Activated CD4-positive, alpha-beta memory T cell treated with anti-CD3 and anti-CD28 coated beads for 36 hours (primary cell): ENCODE measurements at regions of chr12 and their contacts with region 1.

Region 1: DNA sequence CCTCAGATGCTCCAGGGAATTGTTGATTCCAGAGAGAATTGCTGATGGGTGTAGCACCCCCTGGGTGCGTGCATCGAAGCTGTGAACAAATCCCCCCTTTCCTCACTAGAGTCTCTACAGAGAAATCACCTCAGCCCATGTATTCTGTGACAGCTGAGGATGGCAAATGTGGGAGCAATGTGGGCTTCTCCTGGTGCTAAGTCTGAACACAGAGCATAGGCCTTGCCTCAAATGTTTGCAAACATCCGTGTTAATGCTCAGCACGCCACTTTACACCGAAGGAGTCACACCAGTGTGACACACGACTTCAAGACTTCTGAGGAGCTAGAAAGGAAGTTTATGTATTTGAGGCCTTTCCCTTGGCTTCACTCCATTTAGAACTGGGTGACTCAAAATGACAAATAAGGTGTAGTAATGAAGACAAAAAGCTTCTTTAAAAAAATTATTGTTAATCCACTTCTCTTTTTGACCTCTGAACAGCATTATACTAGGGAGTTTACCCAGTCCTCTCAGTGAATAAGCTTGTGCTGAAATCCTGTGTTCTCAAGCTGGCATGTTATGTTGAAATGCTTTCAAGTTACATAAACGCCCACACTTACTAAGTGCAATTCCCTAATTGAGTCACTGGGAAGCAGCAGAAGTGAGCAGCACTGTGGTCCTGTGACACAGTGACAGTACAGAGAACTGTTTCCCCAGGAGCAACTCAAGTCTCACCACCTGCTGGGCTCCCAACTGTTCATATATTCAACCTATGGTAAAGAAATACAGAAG is 92.9 kb downstream of the FAR2 start:
- DNase-seq: peak; percentile 35
- H3K4me3 Mint-ChIP-seq: no peak overlapping the region
- H3K27ac Mint-ChIP-seq: no peak overlapping the region
- H3K4me1 Mint-ChIP-seq: peaks cover 18% of the 10 kb centered on the region
- H3K27me3 Mint-ChIP-seq: no peaks in the 10 kb centered on the region

Region 2: GRCh38 chr12:29082522-29082921 is 159.5 kb before region 1 on chr12:
- CTCF ChIA-PET with region 1: interaction called, 5 read pairs
- POLR2A ChIA-PET with region 1: no interaction called
- intact Hi-C with region 1: loop called (anchors 1 kb)
- DNase-seq: no peak
- H3K4me3 Mint-ChIP-seq: no peak overlapping the region
- H3K27ac Mint-ChIP-seq: peak overlapping the region; percentile 40
- H3K4me1 Mint-ChIP-seq: peaks cover 16% of the 10 kb centered on the region
- H3K27me3 Mint-ChIP-seq: peaks cover 25% of the 10 kb centered on the region

Region 3: DNA sequence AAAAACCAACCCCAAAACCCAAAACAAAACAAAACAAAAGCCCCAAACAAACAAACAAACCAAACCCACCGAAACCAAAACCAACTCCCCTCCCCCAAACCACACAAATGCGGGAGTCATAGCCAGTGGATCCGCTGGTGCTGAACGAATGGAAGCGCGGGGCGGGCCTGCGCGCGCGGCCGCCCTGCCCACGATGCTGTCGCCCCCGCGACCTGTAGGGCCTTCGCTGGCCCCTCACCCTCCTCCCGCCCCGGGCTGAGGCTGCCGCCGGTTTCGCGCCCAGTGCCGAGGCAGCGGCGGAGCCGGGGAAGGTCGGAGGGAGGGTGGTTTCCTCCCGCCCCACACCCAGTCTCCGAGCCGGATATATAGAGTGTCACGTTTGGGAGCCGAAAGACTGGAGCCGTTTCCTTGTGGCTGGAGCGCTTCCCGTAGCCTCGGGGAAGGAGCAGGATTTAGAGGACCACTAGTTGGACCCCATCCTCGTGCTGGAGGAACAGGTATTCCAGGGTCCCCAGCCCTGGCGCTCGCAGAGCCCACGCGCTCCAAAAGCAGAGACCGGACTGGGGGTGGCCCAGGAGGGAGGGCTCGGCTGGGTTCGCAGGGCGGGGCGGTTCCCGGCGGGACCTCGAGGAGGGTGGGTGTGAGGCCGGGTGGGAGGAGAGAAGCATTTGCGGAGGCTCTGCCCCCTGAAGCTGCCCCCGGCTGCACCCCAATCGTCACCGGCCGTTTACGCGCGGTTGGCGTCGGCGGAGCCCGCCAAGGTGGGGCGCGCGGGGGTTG is 92.9 kb before region 1 on chr12 and contains the start of gene FAR2:
- CTCF ChIA-PET with region 1: no interaction called
- POLR2A ChIA-PET with region 1: no interaction called
- intact Hi-C with region 1: loop called (anchors 1 kb)
- DNase-seq: peak; percentile 61
- H3K4me3 Mint-ChIP-seq: peak within 1 kb of the TSS; percentile 92
- H3K27ac Mint-ChIP-seq: peak within 1 kb of the TSS; percentile 76
- H3K4me1 Mint-ChIP-seq: peaks cover 19% of the 10 kb centered on the region
- H3K27me3 Mint-ChIP-seq: peaks cover 1% of the 10 kb centered on the region
- total RNA-seq, gene FAR2: 9.2 to 9.9 TPM

Region 4: DNA sequence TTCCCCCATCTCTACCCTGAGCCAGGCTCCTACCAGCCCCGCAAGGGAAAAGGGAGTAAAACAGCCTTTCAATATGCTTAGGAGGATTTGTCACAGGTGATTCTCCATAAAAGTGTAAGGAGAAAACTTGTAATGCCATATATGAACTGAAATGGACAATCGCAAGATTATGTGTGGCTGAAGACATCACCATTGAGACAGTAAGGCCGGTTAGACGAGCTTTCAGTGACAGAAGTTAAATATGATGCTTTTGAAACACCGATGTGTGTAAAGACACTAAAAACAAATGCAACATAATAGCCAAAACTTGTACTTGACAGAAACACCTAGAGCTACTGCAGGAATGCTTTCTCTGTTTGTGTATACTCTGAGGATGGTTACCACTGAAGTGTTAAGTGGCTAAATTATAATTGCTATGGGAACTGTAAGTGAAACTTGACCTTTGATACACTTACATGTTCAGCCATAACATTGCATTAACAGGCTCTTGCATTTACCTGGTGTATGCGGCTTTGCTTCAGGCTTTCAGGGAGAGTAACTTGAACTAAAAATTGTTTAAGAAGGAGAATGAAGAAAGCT is 50.6 kb before region 1 on chr12:
- CTCF ChIA-PET with region 1: no interaction called
- POLR2A ChIA-PET with region 1: no interaction called
- intact Hi-C with region 1: no loop called
- DNase-seq: no peak
- H3K4me3 Mint-ChIP-seq: no peak overlapping the region
- H3K27ac Mint-ChIP-seq: no peak overlapping the region
- H3K4me1 Mint-ChIP-seq: no peaks in the 10 kb centered on the region
- H3K27me3 Mint-ChIP-seq: no peaks in the 10 kb centered on the region

Region 5: DNA sequence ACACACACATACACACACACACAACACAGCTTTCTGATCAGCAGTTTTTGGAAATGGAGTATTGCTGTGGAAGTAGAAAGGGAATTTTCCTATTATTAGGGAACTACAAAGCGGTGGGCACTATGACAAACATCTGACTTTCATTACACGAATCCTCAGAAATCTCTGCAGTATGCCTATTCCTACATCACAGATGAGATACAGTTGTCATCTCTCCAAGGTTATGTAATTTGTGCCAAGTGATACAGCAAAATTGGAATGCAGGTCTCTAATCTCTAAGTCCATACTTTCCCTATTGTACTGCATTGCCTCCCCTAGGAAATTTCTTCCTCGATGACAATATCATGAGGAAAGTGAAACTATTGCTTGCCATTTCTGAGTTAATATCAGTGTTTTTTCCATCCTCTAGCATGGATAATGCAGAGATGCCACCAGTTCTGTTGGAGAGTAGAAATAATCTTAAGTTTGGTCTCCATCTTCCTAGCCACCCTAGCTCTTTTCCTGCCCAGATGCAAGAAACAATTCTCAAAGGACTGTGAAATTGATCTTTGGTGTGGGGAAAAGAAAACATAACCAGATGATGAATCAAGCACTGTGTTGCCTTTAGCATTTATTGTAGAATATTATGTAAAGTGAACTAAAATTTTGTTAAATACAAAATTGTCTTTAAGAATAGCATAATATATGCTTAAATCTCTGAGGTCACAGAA is 44.2 kb after region 1 on chr12:
- CTCF ChIA-PET with region 1: no interaction called
- POLR2A ChIA-PET with region 1: no interaction called
- intact Hi-C with region 1: no loop called
- DNase-seq: no peak
- H3K4me3 Mint-ChIP-seq: no peak overlapping the region
- H3K27ac Mint-ChIP-seq: no peak overlapping the region
- H3K4me1 Mint-ChIP-seq: no peaks in the 10 kb centered on the region
- H3K27me3 Mint-ChIP-seq: no peaks in the 10 kb centered on the region